MCF 10A (cell line): ENCODE measurements at regions of chr12 and their contacts with region 1.

Region 1: GRCh38 chr12:86698641-86698980 is 442.4 kb upstream of the MGAT4C start:
- DNase-seq: no peak
- H3K4me3 Mint-ChIP-seq: no peak overlapping the region
- H3K27ac Mint-ChIP-seq: no peak overlapping the region
- H3K4me1 Mint-ChIP-seq: no peaks in the 10 kb centered on the region
- H3K27me3 Mint-ChIP-seq: no peaks in the 10 kb centered on the region
- CTCF ChIP-seq: no peak

Region 2: GRCh38 chr12:87960566-87960965 is 1262.0 kb after region 1 on chr12:
- CTCF ChIA-PET with region 1: interaction called, 10 read pairs
- POLR2A ChIA-PET with region 1: no interaction called
- intact Hi-C with region 1: no loop called
- DNase-seq: no peak
- H3K4me3 Mint-ChIP-seq: no peak overlapping the region
- H3K27ac Mint-ChIP-seq: no peak overlapping the region
- H3K4me1 Mint-ChIP-seq: no peaks in the 10 kb centered on the region
- H3K27me3 Mint-ChIP-seq: no peaks in the 10 kb centered on the region
- CTCF ChIP-seq: no peak